CD14-positive monocyte (primary cell): ENCODE measurements at regions of chr2 and their contacts with region 1.

Region 1: GRCh38 chr2:29336391-29337241 is 221.4 kb downstream of the CLIP4 start:
- DNase-seq: no peak
- H3K4me3 ChIP-seq: no peak overlapping the region
- H3K4me3 Mint-ChIP-seq: no peak overlapping the region
- H3K27ac ChIP-seq: no peak overlapping the region
- H3K27ac Mint-ChIP-seq: no peak overlapping the region
- H3K4me1 ChIP-seq: no peaks in the 10 kb centered on the region
- H3K4me1 Mint-ChIP-seq: no peaks in the 10 kb centered on the region
- H3K27me3 ChIP-seq: no peaks in the 10 kb centered on the region
- H3K27me3 Mint-ChIP-seq: peaks cover 2 to 6% (median 4%) of the 10 kb centered on the region in 3 donors
- CTCF ChIP-seq: no peak

Region 2: DNA sequence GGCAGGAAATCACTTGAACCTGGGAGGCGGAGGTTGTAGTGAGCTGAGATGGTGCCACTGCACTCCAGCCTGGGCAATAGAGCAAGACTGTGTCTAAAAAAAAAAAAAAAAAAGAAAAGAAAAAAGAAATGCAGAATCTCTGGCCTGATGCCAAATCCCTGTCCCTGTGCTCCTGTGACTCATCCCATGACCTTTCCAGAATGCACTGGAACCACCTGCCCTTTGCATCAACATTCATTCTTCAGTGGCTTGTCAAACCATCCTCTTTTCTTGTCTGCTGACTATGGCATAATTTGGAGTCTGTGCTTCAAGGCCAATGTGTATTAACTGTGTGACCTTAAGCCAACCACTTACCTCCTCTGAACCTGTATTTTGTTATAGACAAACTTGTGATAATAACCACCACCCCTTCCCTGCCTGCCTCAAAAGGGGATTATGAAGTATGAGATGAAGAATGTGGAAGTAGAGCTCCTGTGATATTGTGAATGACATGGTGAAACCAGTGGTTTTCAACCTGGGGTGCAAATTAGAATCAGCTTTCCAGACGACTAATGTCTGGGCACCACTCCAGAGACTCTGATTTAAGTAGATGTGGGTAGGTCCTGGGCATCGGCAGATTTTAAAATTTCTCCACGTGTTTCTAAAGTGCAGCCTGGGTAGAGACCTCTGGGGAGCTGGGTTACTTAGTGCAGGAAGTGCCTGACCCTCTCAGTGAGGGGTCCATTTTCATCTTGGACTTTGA is 32.0 kb before region 1 on chr2:
- intact Hi-C with region 1: loop called in 1 of 2 experiments (anchors 5 kb)
- DNase-seq: no peak
- H3K4me3 ChIP-seq: no peak overlapping the region
- H3K4me3 Mint-ChIP-seq: no peak overlapping the region
- H3K27ac ChIP-seq: no peak overlapping the region
- H3K27ac Mint-ChIP-seq: no peak overlapping the region
- H3K4me1 ChIP-seq: no peaks in the 10 kb centered on the region
- H3K4me1 Mint-ChIP-seq: peaks cover 4% of the 10 kb centered on the region
- H3K27me3 ChIP-seq: peaks cover 3 to 6% of the 10 kb centered on the region in 2 donors
- H3K27me3 Mint-ChIP-seq: peaks cover 1 to 9% (median 5%) of the 10 kb centered on the region in 3 donors
- CTCF ChIP-seq: no peak